Activated naive CD4-positive, alpha-beta T cell treated with anti-CD3 and anti-CD28 coated beads for 36 hours (primary cell): ENCODE measurements at regions of chr3 and their contacts with region 1.

Region 1: GRCh38 chr3:161274719-161275298 is 53.7 kb downstream of the NMD3 start:
- DNase-seq: peak; percentile 66
- H3K4me3 Mint-ChIP-seq: no peak overlapping the region
- H3K27ac Mint-ChIP-seq: no peak overlapping the region
- H3K4me1 Mint-ChIP-seq: no peaks in the 10 kb centered on the region
- H3K27me3 Mint-ChIP-seq: no peaks in the 10 kb centered on the region

Region 2: GRCh38 chr3:160707187-160707794 is 567.5 kb before region 1 on chr3:
- CTCF ChIA-PET with region 1: no interaction called
- intact Hi-C with region 1: loop called (anchors 1 kb)
- DNase-seq: peak; percentile 56
- H3K4me3 Mint-ChIP-seq: no peak overlapping the region
- H3K27ac Mint-ChIP-seq: no peak overlapping the region
- H3K4me1 Mint-ChIP-seq: no peaks in the 10 kb centered on the region
- H3K27me3 Mint-ChIP-seq: peaks cover 32% of the 10 kb centered on the region

Region 3: GRCh38 chr3:161096771-161097355 is 177.9 kb before region 1 on chr3:
- CTCF ChIA-PET with region 1: interaction called, 6 read pairs
- intact Hi-C with region 1: loop called (anchors 1 kb)
- DNase-seq: peak; percentile 41
- H3K4me3 Mint-ChIP-seq: no peak overlapping the region
- H3K27ac Mint-ChIP-seq: no peak overlapping the region
- H3K4me1 Mint-ChIP-seq: no peaks in the 10 kb centered on the region
- H3K27me3 Mint-ChIP-seq: no peaks in the 10 kb centered on the region

Region 4: DNA sequence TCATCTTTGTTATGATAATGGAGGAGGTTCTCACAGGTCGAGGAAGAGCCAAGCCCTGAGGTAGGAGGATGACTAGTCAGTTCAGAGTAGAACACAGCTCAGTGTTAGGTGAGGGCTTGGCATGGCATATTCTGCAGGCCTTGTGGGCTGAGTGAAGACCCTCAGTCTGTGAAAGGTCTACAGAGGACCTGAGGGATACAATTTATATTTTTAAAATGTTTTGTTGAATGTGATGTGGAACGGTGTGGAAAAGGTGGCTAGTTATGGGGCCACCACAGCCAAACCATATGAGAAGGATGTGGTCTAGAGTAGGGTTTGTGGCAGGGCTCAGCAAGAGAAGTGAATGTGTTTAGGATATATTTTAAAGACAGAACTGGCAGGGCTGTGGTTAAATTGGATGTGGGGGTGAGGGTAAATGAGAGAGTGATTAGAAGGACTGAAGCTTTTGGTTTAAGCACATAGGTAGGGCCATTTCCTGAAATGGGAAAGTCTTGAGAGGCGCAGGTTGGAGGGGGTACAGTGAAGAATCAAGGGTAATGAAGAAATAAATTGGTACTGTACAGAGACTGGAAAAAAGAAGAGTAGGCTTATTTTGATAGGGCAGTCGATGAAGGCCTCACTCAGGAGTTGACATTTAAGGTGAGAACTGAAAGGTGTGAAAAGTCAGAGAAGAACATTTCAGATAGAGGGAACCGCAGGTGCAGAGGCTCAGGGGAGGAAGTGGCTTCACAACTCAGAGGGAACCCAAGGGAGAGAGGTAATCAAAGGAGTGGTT is 36.0 kb after region 1 on chr3:
- CTCF ChIA-PET with region 1: interaction called, 4 read pairs
- intact Hi-C with region 1: loop called (anchors 2 kb)
- DNase-seq: peak; percentile 69
- H3K4me3 Mint-ChIP-seq: no peak overlapping the region
- H3K27ac Mint-ChIP-seq: peak overlapping the region; percentile 43
- H3K4me1 Mint-ChIP-seq: peaks cover 49% of the 10 kb centered on the region
- H3K27me3 Mint-ChIP-seq: no peaks in the 10 kb centered on the region

Region 5: DNA sequence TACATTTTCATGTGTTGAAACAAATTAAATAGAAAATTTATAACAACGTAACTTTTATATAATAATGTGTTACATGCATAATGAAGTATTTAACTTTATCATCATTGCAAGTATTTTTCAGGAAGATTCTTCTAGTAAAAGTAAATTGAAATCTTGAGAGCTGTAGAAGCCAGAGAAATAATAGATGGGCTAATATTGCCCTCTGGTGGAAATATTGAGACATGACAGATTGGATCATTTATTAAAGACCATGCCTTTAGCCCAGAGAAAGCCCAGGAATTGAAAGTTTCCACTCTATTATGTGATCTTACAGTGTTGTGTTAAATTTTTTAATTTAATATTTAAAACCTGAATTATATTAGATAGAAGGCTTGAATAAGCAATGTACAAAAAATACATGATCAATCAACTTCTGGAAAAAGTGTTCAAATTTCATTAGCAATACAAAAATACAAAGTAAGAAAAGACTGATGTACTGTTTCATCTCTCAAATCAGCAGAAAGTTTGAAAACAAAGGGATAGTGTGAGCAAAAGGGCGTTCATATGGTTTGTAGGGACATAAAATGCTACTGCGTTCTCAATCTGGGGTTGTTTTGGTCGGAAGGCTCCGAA is 149.2 kb after region 1 on chr3:
- CTCF ChIA-PET with region 1: interaction called, 24 read pairs
- intact Hi-C with region 1: loop called (anchors 1 kb)
- DNase-seq: no peak
- H3K4me3 Mint-ChIP-seq: no peak overlapping the region
- H3K27ac Mint-ChIP-seq: no peak overlapping the region
- H3K4me1 Mint-ChIP-seq: no peaks in the 10 kb centered on the region
- H3K27me3 Mint-ChIP-seq: no peaks in the 10 kb centered on the region

Region 6: GRCh38 chr3:161630794-161631193 is 356.0 kb after region 1 on chr3:
- CTCF ChIA-PET with region 1: no interaction called
- intact Hi-C with region 1: no loop called
- DNase-seq: no peak
- H3K4me3 Mint-ChIP-seq: no peak overlapping the region
- H3K27ac Mint-ChIP-seq: no peak overlapping the region
- H3K4me1 Mint-ChIP-seq: no peaks in the 10 kb centered on the region
- H3K27me3 Mint-ChIP-seq: no peaks in the 10 kb centered on the region